MCF 10A (cell line): ENCODE measurements at regions of chr2 and their contacts with region 1.

Region 1: DNA sequence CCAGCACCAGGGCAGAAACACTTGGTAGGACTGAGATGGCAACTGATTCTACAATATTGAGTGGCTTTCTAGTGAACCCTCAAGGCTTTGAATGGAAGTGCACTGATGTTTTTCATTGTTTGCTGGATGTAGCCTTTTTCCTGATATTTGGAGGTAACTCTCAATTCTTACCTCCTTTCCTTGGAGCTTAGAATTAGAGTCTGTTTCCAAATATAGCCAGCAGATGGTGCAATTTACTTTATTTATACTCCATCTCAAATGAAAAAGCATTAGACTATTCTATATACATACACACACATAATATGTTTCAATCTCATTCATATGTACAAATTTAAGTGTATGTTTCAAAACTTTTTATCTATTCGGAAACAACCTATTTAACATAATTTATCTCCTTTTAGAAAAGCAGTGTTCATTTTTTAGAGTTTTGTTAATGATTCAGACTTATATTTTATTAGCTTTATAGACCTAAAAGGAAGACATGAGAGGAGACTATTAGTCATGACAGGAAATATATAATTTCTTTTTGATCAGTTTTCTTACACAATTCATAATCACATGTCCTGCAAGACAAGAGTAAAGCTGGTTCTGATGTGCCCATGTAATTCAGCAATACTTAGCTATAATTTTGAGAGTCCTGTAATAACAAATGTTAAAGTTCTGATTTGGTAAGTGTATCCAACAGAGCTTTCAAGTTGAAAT is 124.8 kb downstream of the NUP35 start:
- DNase-seq: peak; percentile 54
- H3K4me3 Mint-ChIP-seq: no peak overlapping the region
- H3K27ac Mint-ChIP-seq: no peak overlapping the region
- H3K4me1 Mint-ChIP-seq: no peaks in the 10 kb centered on the region
- H3K27me3 Mint-ChIP-seq: no peaks in the 10 kb centered on the region
- CTCF ChIP-seq: peak; percentile 31

Region 2: DNA sequence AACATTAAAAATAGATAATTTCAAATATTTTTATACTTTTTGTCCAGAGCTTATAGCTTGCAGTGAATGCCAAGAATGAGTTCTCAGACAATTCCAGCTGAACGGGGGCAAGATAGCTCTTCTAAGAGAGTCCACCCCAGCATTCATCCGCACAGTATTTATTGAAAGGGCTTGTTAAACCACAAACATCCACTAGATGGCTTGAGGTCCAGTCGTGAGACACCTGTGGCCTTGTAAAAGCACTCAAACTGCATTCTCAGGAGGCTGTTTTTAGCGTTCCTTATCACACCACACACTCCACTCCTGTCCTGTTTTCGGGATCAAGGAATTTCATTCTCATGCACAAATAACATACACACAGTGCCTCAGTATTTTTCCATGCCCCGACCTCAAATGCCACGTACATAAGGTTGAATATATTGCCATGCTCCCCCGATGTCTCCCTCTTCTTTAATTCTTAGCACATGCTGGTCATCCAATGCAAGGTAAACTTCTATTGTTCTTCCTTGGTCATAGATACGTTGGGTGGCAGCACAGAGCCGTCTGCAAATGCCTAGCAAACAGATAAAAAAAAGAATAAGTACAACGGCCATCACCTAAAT is 485.6 kb before region 1 on chr2:
- CTCF ChIA-PET with region 1: no interaction called
- POLR2A ChIA-PET with region 1: no interaction called
- intact Hi-C with region 1: loop called (anchors 10 kb)
- DNase-seq: peak; percentile 56
- H3K4me3 Mint-ChIP-seq: no peak overlapping the region
- H3K27ac Mint-ChIP-seq: no peak overlapping the region
- H3K4me1 Mint-ChIP-seq: peaks cover 14% of the 10 kb centered on the region
- H3K27me3 Mint-ChIP-seq: no peaks in the 10 kb centered on the region
- CTCF ChIP-seq: peak; percentile 52

Region 3: GRCh38 chr2:183348492-183348891 is 99.5 kb after region 1 on chr2:
- CTCF ChIA-PET with region 1: interaction called, 11 read pairs
- POLR2A ChIA-PET with region 1: no interaction called
- intact Hi-C with region 1: no loop called
- DNase-seq: no peak
- H3K4me3 Mint-ChIP-seq: no peak overlapping the region
- H3K27ac Mint-ChIP-seq: no peak overlapping the region
- H3K4me1 Mint-ChIP-seq: no peaks in the 10 kb centered on the region
- H3K27me3 Mint-ChIP-seq: no peaks in the 10 kb centered on the region
- CTCF ChIP-seq: no peak

Region 4: DNA sequence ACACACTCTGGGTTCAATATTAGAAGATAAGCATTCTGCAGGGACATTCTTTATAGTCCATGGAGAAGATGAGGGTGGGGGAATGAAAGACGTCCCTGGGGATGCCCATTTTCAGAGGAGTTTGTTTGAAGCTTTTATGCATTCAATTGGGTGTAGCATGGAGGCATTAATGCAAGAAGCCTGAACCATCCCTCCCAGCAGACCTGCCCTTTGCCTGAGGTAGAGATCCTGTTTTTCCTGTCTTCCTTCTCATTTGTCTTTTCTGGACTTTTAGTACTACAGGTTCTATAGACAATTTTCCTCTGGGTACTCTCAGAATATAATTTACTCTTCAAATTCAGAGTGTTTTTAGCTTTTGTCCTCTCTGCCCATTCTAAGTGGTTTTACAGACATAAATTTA is 187.0 kb after region 1 on chr2:
- CTCF ChIA-PET with region 1: no interaction called
- POLR2A ChIA-PET with region 1: no interaction called
- intact Hi-C with region 1: no loop called
- DNase-seq: no peak
- H3K4me3 Mint-ChIP-seq: no peak overlapping the region
- H3K27ac Mint-ChIP-seq: no peak overlapping the region
- H3K4me1 Mint-ChIP-seq: no peaks in the 10 kb centered on the region
- H3K27me3 Mint-ChIP-seq: no peaks in the 10 kb centered on the region
- CTCF ChIP-seq: no peak

Region 5: GRCh38 chr2:184053326-184053725 is 804.3 kb after region 1 on chr2:
- CTCF ChIA-PET with region 1: interaction called, 3 read pairs
- POLR2A ChIA-PET with region 1: no interaction called
- intact Hi-C with region 1: loop called (anchors 10 kb)
- DNase-seq: peak; percentile 51
- H3K4me3 Mint-ChIP-seq: no peak overlapping the region
- H3K27ac Mint-ChIP-seq: no peak overlapping the region
- H3K4me1 Mint-ChIP-seq: no peaks in the 10 kb centered on the region
- H3K27me3 Mint-ChIP-seq: no peaks in the 10 kb centered on the region
- CTCF ChIP-seq: no peak

Region 6: GRCh38 chr2:184598316-184599053 is 1349.5 kb after region 1 on chr2 and contains the start of gene ZNF804A:
- CTCF ChIA-PET with region 1: interaction called, 3 read pairs
- POLR2A ChIA-PET with region 1: no interaction called
- intact Hi-C with region 1: loop called (anchors 10 kb)
- DNase-seq: peak; percentile 59
- H3K4me3 Mint-ChIP-seq: peak within 1 kb of the TSS; percentile 75
- H3K27ac Mint-ChIP-seq: no peak within 1 kb of the TSS
- H3K4me1 Mint-ChIP-seq: peaks cover 4% of the 10 kb centered on the region
- H3K27me3 Mint-ChIP-seq: no peaks in the 10 kb centered on the region
- CTCF ChIP-seq: no peak
- total RNA-seq, gene ZNF804A: 0.17 TPM in 1 of 2 replicates, not detected in the other